ENCODE measurements at regions of chr10 and their contacts with region 1.

Region 1: GRCh38 chr10:21989453-21990154 is 13.9 kb downstream of the DNAJC1 start:
- DNase-seq: peak; percentile 26 to 79 (median 48)
- ATAC-seq: peak; percentile 99
- H3K4me3 ChIP-seq: no peak overlapping the region
- H3K27ac ChIP-seq: no peak overlapping the region
- H3K4me1 ChIP-seq: peaks cover 0 to 3% of the 10 kb centered on the region in 2 experiments; a peak in 1 of 5 replicates
- H3K27me3 ChIP-seq: no peaks in the 10 kb centered on the region
- CTCF ChIP-seq: peak; percentile 75 to 85 (median 81)
- EP300 ChIP-seq: no peak
- POLR2A ChIP-seq: no peak
- RAD21 ChIP-seq: peak; percentile 66 to 78

Region 2: DNA sequence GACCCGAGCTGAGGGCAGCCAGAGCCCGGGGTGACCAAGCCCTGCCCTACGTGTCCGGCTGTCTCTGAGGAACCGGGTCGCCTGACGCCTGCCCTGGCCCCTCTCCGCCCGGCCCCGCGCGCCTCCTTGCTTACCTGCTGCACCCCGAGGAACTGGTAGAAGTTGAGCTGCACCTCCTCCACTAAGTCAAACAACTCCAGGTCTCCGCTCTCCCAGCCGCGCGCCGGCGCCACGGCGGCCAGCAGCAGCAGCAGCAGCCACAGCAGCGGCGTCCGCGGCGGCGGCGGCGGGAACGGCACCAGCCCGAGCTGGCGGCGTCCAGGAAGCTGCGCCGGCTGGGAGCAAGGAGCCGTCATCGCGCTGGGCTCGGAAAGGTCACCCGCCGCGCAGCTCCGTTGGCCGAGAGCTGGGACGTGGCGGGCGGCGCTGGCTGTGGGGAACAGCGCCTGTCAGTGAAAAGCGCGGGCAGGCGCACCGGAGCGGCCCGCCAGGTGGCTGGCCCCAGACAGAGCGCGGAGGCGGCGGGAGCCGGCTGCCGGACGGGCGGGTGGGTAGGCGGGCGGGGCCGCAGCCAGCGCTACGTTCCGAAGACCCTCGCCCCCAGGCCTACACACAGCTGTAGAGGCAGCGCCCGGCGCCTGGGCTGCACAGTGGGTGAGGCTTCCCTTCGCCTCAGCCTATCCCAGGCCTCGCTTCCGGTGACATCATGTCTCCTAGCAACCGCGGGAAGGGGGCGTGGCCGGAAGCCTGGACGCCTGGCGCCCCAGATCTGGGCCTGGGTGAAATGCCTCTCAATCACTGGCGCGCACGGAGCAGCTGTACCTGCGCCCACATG is 13.7 kb after region 1 on chr10 and contains the start of gene DNAJC1:
- CTCF ChIA-PET with region 1: no interaction called
- POLR2A ChIA-PET with region 1: interaction called, 15 read pairs
- in situ Hi-C with region 1: no loop called
- intact Hi-C with region 1: no loop called
- DNase-seq: peak; percentile 96 to 98 (median 97)
- ATAC-seq: peak; percentile 96
- H3K4me3 ChIP-seq: peak within 1 kb of the TSS; percentile 85
- H3K27ac ChIP-seq: peak within 1 kb of the TSS; percentile 87
- H3K4me1 ChIP-seq: peaks cover 8 to 21% of the 10 kb centered on the region in 2 experiments
- H3K27me3 ChIP-seq: no peaks in the 10 kb centered on the region
- CTCF ChIP-seq: no peak; a peak in 1 of 6 replicates
- EP300 ChIP-seq: no peak
- POLR2A ChIP-seq: peak; percentile 74
- RAD21 ChIP-seq: peak in 1 of 2 experiments; percentile 12; a peak in 2 of 4 replicates
- polyA plus RNA-seq, gene DNAJC1: 5.4 to 6.5 TPM

Region 3: DNA sequence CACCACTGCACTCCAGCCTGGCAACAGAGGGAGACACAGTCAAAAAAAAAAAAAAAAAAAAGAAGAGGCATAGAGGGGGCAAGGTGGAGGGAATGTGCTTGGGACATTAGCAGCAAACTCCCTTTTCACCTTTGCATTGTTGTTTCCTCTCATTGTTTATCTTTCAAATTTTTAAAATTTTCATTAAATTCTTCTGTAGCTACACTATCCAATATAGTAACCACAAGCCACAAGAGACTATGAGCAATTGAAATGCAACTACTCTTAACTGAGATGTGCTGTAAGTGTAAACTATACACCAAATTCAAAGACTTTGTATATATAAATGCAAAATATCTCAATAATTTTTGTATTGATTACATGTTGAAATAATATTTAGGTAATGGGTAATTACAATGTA is 184.8 kb after region 1 on chr10:
- CTCF ChIA-PET with region 1: no interaction called
- POLR2A ChIA-PET with region 1: no interaction called
- in situ Hi-C with region 1: no loop called
- intact Hi-C with region 1: no loop called
- DNase-seq: no peak
- ATAC-seq: no peak
- H3K4me3 ChIP-seq: no peak overlapping the region
- H3K27ac ChIP-seq: no peak overlapping the region
- H3K4me1 ChIP-seq: no peaks in the 10 kb centered on the region
- H3K27me3 ChIP-seq: no peaks in the 10 kb centered on the region
- CTCF ChIP-seq: no peak
- EP300 ChIP-seq: no peak
- POLR2A ChIP-seq: no peak
- RAD21 ChIP-seq: no peak

Region 4: GRCh38 chr10:22534849-22535604 is 545.4 kb after region 1 on chr10:
- CTCF ChIA-PET with region 1: no interaction called
- POLR2A ChIA-PET with region 1: no interaction called
- in situ Hi-C with region 1: no loop called
- intact Hi-C with region 1: loop called (anchors 5 kb)
- DNase-seq: no peak
- ATAC-seq: no peak; the same call in 2 of the 3 replicates
- H3K4me3 ChIP-seq: no peak overlapping the region
- H3K27ac ChIP-seq: no peak overlapping the region
- H3K4me1 ChIP-seq: no peaks in the 10 kb centered on the region
- H3K27me3 ChIP-seq: no peaks in the 10 kb centered on the region
- CTCF ChIP-seq: no peak
- EP300 ChIP-seq: no peak
- POLR2A ChIP-seq: no peak
- RAD21 ChIP-seq: no peak